ENCODE measurements at regions of chr7 and their contacts with region 1.

Region 1: GRCh38 chr7:29639881-29640595 is 76.4 kb downstream of the PRR15 start:
- DNase-seq: no peak
- ATAC-seq: no peak
- H3K4me3 ChIP-seq: no peak overlapping the region
- H3K27ac ChIP-seq: no peak overlapping the region
- H3K4me1 ChIP-seq: peaks cover 0 to 11% (median 0%) of the 10 kb centered on the region in 9 donors
- H3K27me3 ChIP-seq: no peaks in the 10 kb centered on the region
- CTCF ChIP-seq: no peak

Region 2: GRCh38 chr7:29915481-29916215 is 275.6 kb after region 1 on chr7:
- intact Hi-C with region 1: loop called in 8 of 10 experiments (anchors 5 to 10 kb)
- DNase-seq: no peak
- ATAC-seq: peak in 2 of 8 donors; percentile 19 to 49
- H3K4me3 ChIP-seq: no peak overlapping the region
- H3K27ac ChIP-seq: no peak overlapping the region
- H3K4me1 ChIP-seq: peaks cover 0 to 12% (median 7%) of the 10 kb centered on the region in 9 donors
- H3K27me3 ChIP-seq: no peaks in the 10 kb centered on the region
- CTCF ChIP-seq: no peak

Region 3: DNA sequence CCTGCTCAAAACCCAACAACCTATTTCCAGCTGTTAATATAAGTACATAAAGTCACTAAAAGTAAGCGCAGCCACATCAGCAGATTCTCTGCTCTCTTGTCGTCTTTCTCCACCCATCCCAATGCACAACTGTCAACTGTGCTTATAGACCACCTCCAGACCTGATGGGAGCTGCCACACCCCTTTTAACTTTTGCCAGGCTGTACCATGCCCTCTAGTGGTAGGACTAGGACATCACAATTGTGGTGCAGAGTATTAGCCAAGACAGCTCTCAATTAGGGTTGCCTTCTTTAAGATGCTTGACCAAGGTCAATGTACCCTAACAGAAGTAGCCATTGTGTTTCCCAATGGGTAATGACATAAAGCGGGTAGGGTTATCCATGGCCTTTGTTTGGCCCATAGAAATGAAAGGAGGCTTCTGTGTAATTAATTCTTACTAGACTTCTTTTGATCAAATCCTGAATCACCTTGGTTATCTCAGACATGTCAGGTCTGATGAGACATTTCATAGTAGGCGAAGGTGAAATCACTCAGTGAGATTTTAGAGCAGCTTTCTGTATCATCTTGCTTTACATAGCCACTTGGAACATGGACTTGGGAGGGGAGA is 281.5 kb after region 1 on chr7:
- intact Hi-C with region 1: loop called in 8 of 10 experiments (anchors 5 to 10 kb)
- DNase-seq: peak in 1 of 2 donors; percentile 51
- ATAC-seq: peak in 7 of 8 donors; percentile 73 to 88 (median 85)
- H3K4me3 ChIP-seq: no peak overlapping the region
- H3K27ac ChIP-seq: no peak overlapping the region
- H3K4me1 ChIP-seq: no peaks in the 10 kb centered on the region
- H3K27me3 ChIP-seq: no peaks in the 10 kb centered on the region
- CTCF ChIP-seq: peak; percentile 84 to 93 (median 90)

Region 4: GRCh38 chr7:30074422-30075030 is 434.5 kb after region 1 on chr7:
- intact Hi-C with region 1: loop called in 2 of 10 experiments (anchors 10 kb)
- DNase-seq: no peak
- ATAC-seq: no peak
- H3K4me3 ChIP-seq: no peak overlapping the region
- H3K27ac ChIP-seq: no peak overlapping the region
- H3K4me1 ChIP-seq: peaks cover 0 to 13% (median 0%) of the 10 kb centered on the region in 9 donors
- H3K27me3 ChIP-seq: no peaks in the 10 kb centered on the region
- CTCF ChIP-seq: peak in 6 of 9 donors; percentile 37 to 60 (median 51)

Measured in heart right ventricle (tissue), 16 donors.